Tibial artery (tissue), 4 donors: ENCODE measurements at regions of chr4 and their contacts with region 1.

Region 1: DNA sequence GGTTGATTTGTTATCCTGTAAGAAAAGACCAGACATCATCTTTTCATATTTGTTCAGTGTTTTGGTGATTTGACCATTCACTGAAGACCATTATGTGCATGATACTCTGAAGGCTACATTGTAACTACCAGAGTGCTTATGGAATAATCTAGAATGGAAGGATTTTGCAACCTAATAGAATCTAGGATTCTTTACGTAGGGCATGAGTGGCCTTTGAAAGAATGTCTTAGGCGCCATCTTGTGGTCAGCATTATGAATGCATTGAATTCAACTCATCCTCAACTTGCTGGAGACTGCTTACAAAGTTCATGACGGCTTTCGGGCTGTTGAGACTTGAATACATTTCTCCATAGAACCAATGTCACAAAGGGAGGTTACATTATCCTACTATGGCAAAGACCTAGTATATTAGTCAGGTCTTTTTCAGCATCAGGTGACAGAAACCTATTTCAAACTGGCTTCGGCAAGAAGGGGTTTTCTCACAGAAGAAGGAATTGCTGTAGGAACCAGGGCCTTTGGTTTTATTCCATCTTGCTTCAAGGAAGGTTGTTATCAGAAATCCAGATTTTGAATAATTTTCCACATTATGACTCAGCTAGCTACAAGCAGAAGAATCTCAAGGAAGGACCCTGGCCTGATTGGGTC is 104.1 kb downstream of the GPAT3 start:
- DNase-seq: peak in 1 of 2 donors; percentile 42
- H3K4me3 ChIP-seq: no peak overlapping the region
- H3K27ac ChIP-seq: no peak overlapping the region
- H3K4me1 ChIP-seq: no peaks in the 10 kb centered on the region
- H3K27me3 ChIP-seq: peaks cover 0 to 6% of the 10 kb centered on the region in 2 donors
- CTCF ChIP-seq: peak; percentile 75 to 82

Region 2: GRCh38 chr4:83516042-83516772 is 123.8 kb before region 1 on chr4:
- intact Hi-C with region 1: loop called (anchors 10 kb)
- DNase-seq: no peak
- H3K4me3 ChIP-seq: no peak overlapping the region
- H3K27ac ChIP-seq: no peak overlapping the region
- H3K4me1 ChIP-seq: no peaks in the 10 kb centered on the region
- H3K27me3 ChIP-seq: no peaks in the 10 kb centered on the region
- CTCF ChIP-seq: no peak

Region 3: GRCh38 chr4:83716874-83717273 is 76.9 kb after region 1 on chr4:
- intact Hi-C with region 1: no loop called
- DNase-seq: no peak
- H3K4me3 ChIP-seq: no peak overlapping the region
- H3K27ac ChIP-seq: no peak overlapping the region
- H3K4me1 ChIP-seq: no peaks in the 10 kb centered on the region
- H3K27me3 ChIP-seq: no peaks in the 10 kb centered on the region
- CTCF ChIP-seq: no peak